Panc1 (cell line): ENCODE measurements at regions of chr2 and their contacts with region 1.

Region 1: DNA sequence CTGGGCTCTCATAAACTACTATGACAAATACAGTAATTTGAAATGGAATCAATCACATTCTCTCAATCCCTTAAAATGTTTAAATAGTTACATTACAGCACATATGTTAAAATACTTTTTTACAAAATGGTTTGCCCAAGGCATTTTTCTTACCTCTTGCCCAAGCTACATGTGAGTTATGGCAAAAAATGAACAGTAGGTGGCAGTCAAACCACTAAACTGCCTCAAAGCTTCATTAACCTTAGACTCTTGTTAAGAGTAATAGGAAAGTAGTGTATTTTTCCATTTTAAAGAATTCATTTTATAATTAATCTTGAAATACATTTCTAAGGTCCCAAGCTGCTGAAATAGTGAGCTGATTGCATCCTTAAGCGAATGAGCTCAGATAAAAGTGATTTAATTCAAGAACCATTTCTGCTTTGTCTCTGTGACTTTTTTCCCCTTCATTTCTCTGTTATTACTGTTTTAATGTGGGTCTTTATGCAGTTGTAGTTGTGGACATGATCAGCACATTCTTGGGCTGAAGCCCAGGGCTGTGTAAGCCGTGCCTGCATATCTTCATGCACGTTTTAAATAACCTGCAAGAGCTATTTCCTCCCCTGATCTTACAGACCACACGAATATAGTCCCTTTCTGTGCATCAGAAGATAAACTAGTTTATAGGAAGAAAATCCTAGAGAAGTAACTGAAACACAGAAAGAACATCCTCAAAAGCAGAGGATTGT is 311.8 kb downstream of the LNPK start:
- DNase-seq: peak; percentile 66
- ATAC-seq: peak; percentile 84
- H3K4me3 ChIP-seq: no peak overlapping the region
- H3K27ac ChIP-seq: no peak overlapping the region
- H3K4me1 ChIP-seq: no peaks in the 10 kb centered on the region
- H3K27me3 ChIP-seq: peaks cover 2% of the 10 kb centered on the region; the same call in 1 of the 2 replicates
- CTCF ChIP-seq: peak; percentile 70; the same call in 1 of the 2 replicates

Region 2: GRCh38 chr2:175366815-175367214 is 323.5 kb before region 1 on chr2:
- CTCF ChIA-PET with region 1: interaction called, 12 read pairs
- POLR2A ChIA-PET with region 1: no interaction called
- in situ Hi-C with region 1: no loop called
- intact Hi-C with region 1: loop called (anchors 5 kb)
- DNase-seq: no peak
- ATAC-seq: peak; percentile 91
- H3K4me3 ChIP-seq: no peak overlapping the region
- H3K27ac ChIP-seq: no peak overlapping the region
- H3K4me1 ChIP-seq: no peaks in the 10 kb centered on the region
- H3K27me3 ChIP-seq: 0 out of 2 replicates have a peak, but pooled peaks cover 3% of the 10 kb centered on the region
- CTCF ChIP-seq: peak; percentile 88

Region 3: DNA sequence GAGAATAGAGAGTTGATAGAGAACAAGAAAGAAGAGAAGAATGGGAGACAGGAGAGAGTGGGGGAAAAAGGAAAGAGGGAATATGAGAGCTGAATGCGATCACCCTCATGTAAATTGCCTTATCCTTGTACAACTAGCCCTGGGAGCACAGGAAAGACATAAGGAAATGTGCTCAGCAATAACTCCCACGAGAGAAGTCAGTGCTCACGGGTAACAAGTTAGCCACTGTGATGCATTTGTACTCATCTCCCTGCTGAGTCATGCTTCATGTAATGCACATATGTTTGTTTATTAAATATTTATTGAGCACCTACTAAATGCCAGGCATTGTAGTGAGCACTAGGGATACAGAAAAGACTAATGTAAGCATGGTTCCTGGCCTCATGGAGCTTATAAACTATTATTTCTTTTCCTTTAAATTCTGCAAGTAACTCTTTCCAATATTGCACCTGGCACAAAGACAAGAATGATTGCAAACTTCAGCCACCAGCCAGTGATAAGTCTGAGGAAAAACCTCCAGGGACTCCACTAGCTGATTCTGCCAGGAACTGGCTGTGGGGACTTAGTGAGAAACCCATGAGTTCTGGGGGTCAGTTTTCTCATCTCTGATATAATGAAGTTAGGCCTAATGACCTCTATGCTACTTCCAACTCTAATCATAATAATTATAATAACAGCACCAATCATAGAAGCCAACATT is 187.7 kb after region 1 on chr2:
- CTCF ChIA-PET with region 1: no interaction called
- POLR2A ChIA-PET with region 1: no interaction called
- in situ Hi-C with region 1: no loop called
- intact Hi-C with region 1: no loop called
- DNase-seq: no peak
- ATAC-seq: no peak
- H3K4me3 ChIP-seq: no peak overlapping the region
- H3K27ac ChIP-seq: no peak overlapping the region
- H3K4me1 ChIP-seq: no peaks in the 10 kb centered on the region
- H3K27me3 ChIP-seq: no peaks in the 10 kb centered on the region; the same call in 1 of the 2 replicates
- CTCF ChIP-seq: no peak

Region 4: DNA sequence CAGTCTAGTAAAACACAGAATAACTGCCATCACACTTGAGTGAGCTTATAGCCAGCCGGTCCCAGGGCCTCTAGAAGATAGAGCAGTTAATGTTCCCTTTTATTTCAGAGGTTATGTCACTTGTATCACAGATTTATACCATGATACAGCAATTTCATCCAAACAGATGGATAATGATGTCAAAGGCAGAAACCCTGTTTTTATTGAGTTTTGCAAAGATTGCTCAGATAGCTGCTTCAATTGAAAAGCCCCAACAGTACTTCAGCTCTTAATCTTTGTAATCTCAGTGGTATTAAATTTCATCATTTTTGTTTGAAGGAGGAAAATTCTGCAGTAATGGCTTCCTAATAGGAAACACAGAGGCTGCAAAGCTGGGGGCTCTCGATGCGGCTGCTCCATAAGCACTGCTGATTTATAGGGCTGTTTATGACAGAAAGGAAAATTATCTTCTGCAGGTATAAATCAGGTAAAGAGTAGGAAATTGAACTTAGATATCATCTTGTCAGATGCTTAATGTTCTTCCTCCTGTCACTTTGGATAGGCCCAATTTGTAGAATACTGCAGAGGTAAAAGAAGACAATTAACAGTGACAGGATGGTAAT is 199.5 kb after region 1 on chr2:
- CTCF ChIA-PET with region 1: no interaction called
- POLR2A ChIA-PET with region 1: no interaction called
- in situ Hi-C with region 1: no loop called
- intact Hi-C with region 1: loop called (anchors 5 kb)
- DNase-seq: no peak
- ATAC-seq: no peak
- H3K4me3 ChIP-seq: no peak overlapping the region
- H3K27ac ChIP-seq: no peak overlapping the region
- H3K4me1 ChIP-seq: no peaks in the 10 kb centered on the region
- H3K27me3 ChIP-seq: 0 out of 2 replicates have a peak, but pooled peaks cover 4% of the 10 kb centered on the region
- CTCF ChIP-seq: no peak